Activated CD4-positive, alpha-beta T cell treated with anti-CD3 and anti-CD28 coated beads, Interleukin-2, amount 10 ng/mL, durations not matched to agents 24 days and 14 days (primary cell): ENCODE measurements at regions of chr9 and their contacts with region 1.

Region 1: GRCh38 chr9:6681147-6681956 is 35.8 kb upstream of the GLDC start:
- DNase-seq: peak; percentile 96
- H3K4me3 Mint-ChIP-seq: peak overlapping the region; percentile 97
- H3K27ac Mint-ChIP-seq: peak overlapping the region; percentile 99
- H3K4me1 Mint-ChIP-seq: peaks cover 13% of the 10 kb centered on the region
- H3K27me3 Mint-ChIP-seq: no peaks in the 10 kb centered on the region

Region 2: DNA sequence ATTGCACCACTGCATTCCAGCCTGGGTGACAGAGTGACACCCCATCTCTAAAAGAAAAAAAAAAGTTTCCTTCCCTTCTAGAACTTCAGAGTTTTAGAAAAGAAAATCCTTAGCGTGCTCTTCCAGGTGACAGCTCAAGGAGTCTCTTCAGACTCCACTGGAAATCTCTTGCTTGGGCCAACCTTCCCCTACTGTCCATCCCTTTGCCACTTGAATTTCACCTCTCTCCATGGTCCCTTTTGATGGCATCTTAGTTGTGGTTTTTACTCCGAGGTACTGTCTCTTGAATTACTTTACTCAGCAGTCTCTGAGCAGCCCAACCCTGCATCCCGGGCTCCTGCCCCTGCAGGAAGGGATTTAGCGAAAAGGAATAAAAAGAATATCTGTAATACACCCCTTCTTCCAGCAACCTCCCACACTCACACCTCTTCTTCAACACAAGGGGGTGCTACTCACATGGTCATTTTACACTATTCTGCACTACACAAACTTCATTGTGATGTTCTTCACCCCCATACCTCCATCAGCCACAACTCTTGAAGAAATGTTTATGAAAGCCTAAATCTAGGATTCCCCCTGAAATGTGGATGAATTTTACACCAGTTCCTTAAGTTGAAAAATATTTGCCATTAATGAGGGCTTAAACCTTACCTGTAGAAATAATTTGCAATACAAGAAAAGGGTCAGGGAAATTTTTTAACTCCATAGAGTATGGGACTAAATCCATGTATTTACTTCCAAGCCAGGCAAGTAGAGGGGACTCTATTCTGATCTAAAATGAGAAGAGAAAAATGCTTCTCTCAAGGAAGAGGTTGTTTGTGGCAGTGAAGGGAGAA is 327.3 kb before region 1 on chr9:
- intact Hi-C with region 1: loop called (anchors 2 kb)
- DNase-seq: peak; percentile 82
- H3K4me3 Mint-ChIP-seq: no peak overlapping the region
- H3K27ac Mint-ChIP-seq: no peak overlapping the region
- H3K4me1 Mint-ChIP-seq: peaks cover 11% of the 10 kb centered on the region
- H3K27me3 Mint-ChIP-seq: peaks cover 25% of the 10 kb centered on the region

Region 3: DNA sequence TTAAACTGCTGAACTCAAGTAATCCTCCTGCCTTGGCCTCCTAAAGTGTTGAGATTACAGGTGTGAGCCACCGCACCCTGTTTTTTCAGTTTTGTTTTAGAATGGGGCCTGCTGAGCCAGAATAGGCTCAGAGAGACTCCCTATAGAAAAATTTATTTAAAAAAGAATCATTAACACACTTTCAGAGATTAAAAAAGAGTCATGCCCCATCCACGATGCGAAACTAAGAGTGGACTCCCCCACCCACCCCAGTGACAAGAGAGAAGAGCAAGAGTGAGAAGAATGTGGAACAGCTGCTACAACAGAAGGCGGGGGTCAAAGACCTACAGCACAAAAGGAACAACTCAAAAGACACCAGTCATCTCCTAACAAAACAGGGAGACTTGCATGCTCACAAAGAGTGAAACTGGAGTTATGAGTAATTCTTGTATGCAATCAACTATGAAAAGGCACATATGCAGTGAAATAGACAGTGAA is 83.1 kb before region 1 on chr9:
- intact Hi-C with region 1: loop called (anchors 5 kb)
- DNase-seq: peak; percentile 58
- H3K4me3 Mint-ChIP-seq: no peak overlapping the region
- H3K27ac Mint-ChIP-seq: no peak overlapping the region
- H3K4me1 Mint-ChIP-seq: peaks cover 7% of the 10 kb centered on the region
- H3K27me3 Mint-ChIP-seq: no peaks in the 10 kb centered on the region

Region 4: GRCh38 chr9:6632516-6633183 is 48.7 kb before region 1 on chr9:
- intact Hi-C with region 1: no loop called
- DNase-seq: no peak
- H3K4me3 Mint-ChIP-seq: no peak overlapping the region
- H3K27ac Mint-ChIP-seq: no peak overlapping the region
- H3K4me1 Mint-ChIP-seq: no peaks in the 10 kb centered on the region
- H3K27me3 Mint-ChIP-seq: peaks cover 10% of the 10 kb centered on the region

Region 5: GRCh38 chr9:6703898-6704639 is 22.7 kb after region 1 on chr9:
- intact Hi-C with region 1: loop called (anchors 1 kb)
- DNase-seq: peak; percentile 96
- H3K4me3 Mint-ChIP-seq: peak overlapping the region; percentile 87
- H3K27ac Mint-ChIP-seq: peak overlapping the region; percentile 87
- H3K4me1 Mint-ChIP-seq: peaks cover 16% of the 10 kb centered on the region
- H3K27me3 Mint-ChIP-seq: peaks cover 2% of the 10 kb centered on the region

Region 6: DNA sequence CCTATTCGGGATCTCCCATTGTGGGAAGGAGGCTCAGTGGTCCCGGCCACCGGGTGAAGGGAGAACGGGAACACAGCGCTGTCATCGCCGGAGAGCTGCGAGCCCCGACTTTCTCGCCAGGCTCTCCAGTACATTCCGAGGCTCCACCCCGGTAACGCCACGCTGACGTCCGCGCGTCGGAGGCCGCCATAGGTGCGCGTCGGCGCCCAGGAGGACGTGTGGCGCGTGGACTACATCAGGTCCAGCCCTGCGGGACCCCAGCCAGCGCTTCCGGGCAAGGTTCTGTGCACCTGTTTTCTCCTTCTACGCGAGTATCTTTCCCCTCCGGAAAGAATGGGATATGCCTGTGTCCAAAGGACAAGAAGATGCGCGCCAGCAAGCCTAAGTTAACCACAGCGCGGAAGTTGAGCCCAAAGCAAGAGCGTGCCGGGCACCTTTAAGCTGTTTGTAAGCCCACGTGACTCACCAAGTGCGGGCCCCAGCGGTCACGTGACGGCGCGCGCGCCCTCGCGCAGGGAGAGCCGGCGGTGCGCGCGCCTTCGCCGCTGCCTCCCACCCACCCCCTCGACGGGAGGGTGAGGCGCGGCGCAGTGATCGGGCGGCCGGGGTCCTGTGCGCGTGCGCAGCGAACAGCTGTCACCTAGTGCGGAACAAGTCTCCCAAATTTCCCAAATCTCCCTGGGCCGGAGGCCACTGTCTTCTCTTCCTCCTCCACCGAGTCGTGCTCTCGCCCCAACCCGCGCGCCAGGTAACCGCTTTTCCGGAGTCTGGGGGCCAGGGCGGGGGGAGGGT is 76.3 kb after region 1 on chr9 and contains the start of gene KDM4C:
- intact Hi-C with region 1: loop called (anchors 1 kb)
- DNase-seq: peak; percentile 98
- H3K4me3 Mint-ChIP-seq: peak within 1 kb of the TSS; percentile 97
- H3K27ac Mint-ChIP-seq: peak within 1 kb of the TSS; percentile 99
- H3K4me1 Mint-ChIP-seq: peaks cover 23% of the 10 kb centered on the region
- H3K27me3 Mint-ChIP-seq: no peaks in the 10 kb centered on the region
- total RNA-seq, gene KDM4C: 36.4 and 39.8 TPM in 2 replicates